SK-N-SH (cell line): ENCODE measurements at regions of chr3 and their contacts with region 1.

Region 1: DNA sequence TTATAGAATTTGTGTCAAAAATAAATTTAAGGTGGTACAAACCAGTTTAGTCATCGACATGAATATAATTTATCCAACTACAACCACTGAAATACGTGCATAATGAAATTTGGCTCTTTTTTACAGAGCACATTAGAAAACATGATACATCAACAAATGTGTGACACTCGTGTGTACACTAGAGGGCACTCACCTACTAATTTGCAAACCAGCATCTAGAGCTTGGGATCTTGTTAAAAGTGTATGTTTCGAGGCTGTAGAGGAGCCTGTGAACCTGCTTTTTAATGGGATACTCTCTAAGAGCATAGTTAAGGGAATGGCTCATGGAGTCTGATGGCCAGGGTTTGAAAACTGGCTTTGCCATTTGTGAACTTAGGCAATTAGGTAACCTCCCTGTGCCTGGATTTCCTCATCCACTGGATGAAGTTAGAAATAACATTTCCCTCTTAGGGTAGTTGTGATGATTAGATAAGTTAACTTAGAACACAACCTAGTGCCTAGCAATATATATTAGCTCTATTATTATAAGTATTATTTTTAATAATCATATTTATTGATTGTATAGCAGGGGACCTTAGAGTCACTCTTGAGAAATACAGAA is 8.8 kb upstream of the CPOX start:
- DNase-seq: peak; percentile 51
- H3K4me3 ChIP-seq: peak overlapping the region in 1 of 2 experiments; percentile 33; a peak in 1 of 4 replicates
- H3K27ac ChIP-seq: no peak overlapping the region; a peak in 1 of 4 replicates
- H3K4me1 ChIP-seq: no peaks in the 10 kb centered on the region; a peak in 1 of 4 replicates
- H3K27me3 ChIP-seq: no peaks in the 10 kb centered on the region
- CTCF ChIP-seq: peak; percentile 88
- EP300 ChIP-seq: no peak
- RAD21 ChIP-seq: peak; percentile 99

Region 2: DNA sequence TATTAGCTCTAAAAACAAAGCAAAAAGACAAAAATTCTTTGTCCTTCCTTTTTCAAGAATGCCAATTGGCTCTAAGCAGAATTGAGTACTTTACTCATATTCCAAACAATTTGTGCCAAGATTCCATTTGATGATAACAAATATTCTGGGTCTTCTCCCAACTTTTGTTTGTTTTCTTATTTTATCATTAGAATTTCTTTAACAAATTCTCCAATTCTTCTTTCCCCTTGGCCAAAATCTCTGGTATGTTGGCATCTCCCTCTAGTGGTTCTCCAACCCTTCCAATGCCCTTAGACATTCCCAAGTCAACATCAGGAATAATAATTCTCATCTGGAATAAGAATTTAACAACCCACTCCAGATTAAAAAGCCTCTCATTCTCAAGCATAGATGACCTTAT is 14.1 kb before region 1 on chr3:
- CTCF ChIA-PET with region 1: interaction called, 12 read pairs
- POLR2A ChIA-PET with region 1: no interaction called
- DNase-seq: no peak
- H3K4me3 ChIP-seq: no peak overlapping the region
- H3K27ac ChIP-seq: no peak overlapping the region
- H3K4me1 ChIP-seq: peaks cover 3 to 10% of the 10 kb centered on the region in 2 experiments; a peak in 3 of 4 replicates
- H3K27me3 ChIP-seq: no peaks in the 10 kb centered on the region
- CTCF ChIP-seq: peak; percentile 56
- EP300 ChIP-seq: no peak
- RAD21 ChIP-seq: no peak

Region 3: DNA sequence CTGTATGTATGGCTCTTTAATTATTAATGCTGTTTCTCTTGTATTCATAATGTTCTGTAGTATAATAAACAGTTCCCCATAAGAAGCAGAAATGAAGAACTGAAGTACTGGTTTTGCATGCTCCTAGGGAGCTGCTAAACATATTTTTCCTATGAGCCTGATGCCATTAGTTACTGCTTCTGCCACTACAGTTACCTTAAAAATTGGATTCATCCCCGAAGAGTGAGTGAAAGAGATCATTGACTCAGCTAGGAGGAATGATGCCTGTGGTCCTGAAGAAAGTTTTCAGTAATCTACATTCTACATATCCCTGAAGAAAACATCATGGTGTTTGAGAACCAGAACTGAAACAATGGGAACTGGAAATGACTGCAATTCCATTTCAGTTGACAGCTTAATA is 123.9 kb after region 1 on chr3:
- CTCF ChIA-PET with region 1: interaction called, 13 read pairs
- POLR2A ChIA-PET with region 1: no interaction called
- DNase-seq: no peak
- H3K4me3 ChIP-seq: no peak overlapping the region
- H3K27ac ChIP-seq: peak overlapping the region; percentile 14 to 24; a peak in 3 of 4 replicates
- H3K4me1 ChIP-seq: peaks cover 0 to 7% of the 10 kb centered on the region in 2 experiments; a peak in 3 of 4 replicates
- H3K27me3 ChIP-seq: no peaks in the 10 kb centered on the region
- CTCF ChIP-seq: no peak
- EP300 ChIP-seq: no peak
- RAD21 ChIP-seq: no peak

Region 4: GRCh38 chr3:98770261-98771039 is 168.3 kb after region 1 on chr3:
- CTCF ChIA-PET with region 1: interaction called, 12 read pairs
- POLR2A ChIA-PET with region 1: no interaction called
- DNase-seq: no peak
- H3K4me3 ChIP-seq: no peak overlapping the region
- H3K27ac ChIP-seq: peak overlapping the region in 1 of 2 experiments; percentile 14; a peak in 1 of 4 replicates
- H3K4me1 ChIP-seq: peaks cover 4 to 24% of the 10 kb centered on the region in 2 experiments; a peak in 3 of 4 replicates
- H3K27me3 ChIP-seq: no peaks in the 10 kb centered on the region
- CTCF ChIP-seq: no peak
- EP300 ChIP-seq: no peak
- RAD21 ChIP-seq: no peak

Region 5: DNA sequence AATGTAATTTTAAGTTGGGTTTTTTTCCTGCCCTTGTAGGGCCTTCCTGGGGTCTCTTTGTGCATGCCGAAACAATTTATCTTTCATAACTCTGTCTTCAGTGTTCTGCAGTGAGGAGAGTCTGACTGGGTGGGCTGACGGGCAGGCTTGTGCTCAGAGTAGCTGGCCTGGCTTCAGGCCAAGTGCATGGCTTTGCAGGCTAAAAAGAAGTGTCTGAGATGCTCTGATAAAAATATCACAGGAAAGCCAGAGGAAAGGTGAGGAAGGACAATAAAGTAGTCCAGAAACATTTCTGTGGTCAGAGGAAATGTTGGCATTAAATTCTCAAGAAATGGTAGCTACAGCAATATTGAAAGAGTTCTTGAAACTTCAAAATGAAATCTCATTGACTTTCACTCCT is 186.5 kb after region 1 on chr3:
- CTCF ChIA-PET with region 1: interaction called, 21 read pairs
- POLR2A ChIA-PET with region 1: no interaction called
- DNase-seq: peak; percentile 49
- H3K4me3 ChIP-seq: no peak overlapping the region
- H3K27ac ChIP-seq: peak overlapping the region; percentile 19 to 82; a peak in 3 of 4 replicates
- H3K4me1 ChIP-seq: peaks cover 15 to 18% of the 10 kb centered on the region in 2 experiments
- H3K27me3 ChIP-seq: no peaks in the 10 kb centered on the region
- CTCF ChIP-seq: no peak
- EP300 ChIP-seq: 0 out of 4 replicates have a peak, but pooled peaks have one; percentile 21 to 35
- RAD21 ChIP-seq: no peak

Region 6: DNA sequence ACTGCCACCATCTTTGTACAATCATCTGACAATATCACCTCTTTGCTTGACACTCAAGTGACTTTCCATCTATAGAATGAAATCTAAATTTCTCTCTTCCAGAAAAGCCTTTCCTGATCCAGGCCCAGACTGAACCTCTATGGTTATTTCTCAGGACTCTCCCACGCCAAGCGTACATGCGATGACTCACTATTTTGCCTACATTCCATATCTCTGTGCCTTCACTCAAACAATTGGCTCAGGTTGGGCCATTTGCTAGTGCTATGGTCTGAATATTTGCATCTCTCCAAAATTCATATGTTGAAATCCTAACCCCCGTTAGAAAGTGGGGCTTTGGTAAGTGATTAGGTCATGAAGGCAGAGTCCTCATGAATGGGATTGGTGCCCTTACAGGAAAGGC is 204.8 kb after region 1 on chr3:
- CTCF ChIA-PET with region 1: interaction called, 197 read pairs
- POLR2A ChIA-PET with region 1: no interaction called
- DNase-seq: no peak
- H3K4me3 ChIP-seq: no peak overlapping the region
- H3K27ac ChIP-seq: peak overlapping the region in 1 of 2 experiments; percentile 39; a peak in 2 of 4 replicates
- H3K4me1 ChIP-seq: peaks cover 0 to 5% of the 10 kb centered on the region in 2 experiments; a peak in 2 of 4 replicates
- H3K27me3 ChIP-seq: no peaks in the 10 kb centered on the region
- CTCF ChIP-seq: no peak
- EP300 ChIP-seq: no peak
- RAD21 ChIP-seq: no peak

Region 7: DNA sequence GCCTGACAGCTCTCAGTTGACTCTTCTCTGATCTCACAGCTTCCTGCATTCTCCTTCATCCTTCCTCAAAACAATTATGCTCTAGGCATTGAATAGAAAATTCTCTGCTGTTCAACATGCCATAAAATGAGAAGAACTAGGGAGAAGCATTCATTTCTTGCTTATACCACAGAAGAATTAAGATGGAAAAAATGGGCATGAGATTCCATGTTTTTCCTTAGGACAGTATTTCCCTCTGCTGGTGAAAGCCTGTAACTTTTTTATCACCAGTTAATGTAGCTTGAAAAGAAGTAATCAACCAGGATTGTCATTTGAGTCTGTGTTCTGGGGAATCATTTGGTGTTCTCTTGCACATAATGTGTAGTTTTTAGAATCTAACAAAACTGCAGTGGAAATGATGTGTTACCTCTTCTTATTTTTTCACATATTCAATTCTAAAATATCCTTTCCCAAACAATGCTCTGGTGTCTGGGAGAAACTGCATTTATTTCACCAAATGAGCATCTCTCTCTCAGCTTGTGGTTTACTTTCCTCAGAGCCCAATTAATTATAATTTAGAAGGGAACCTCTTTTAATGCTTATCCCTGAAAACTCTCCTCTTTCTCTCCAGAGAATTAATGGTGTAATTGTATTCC is 392.1 kb after region 1 on chr3:
- CTCF ChIA-PET with region 1: interaction called, 72 read pairs
- POLR2A ChIA-PET with region 1: no interaction called
- DNase-seq: peak; percentile 24
- H3K4me3 ChIP-seq: no peak overlapping the region
- H3K27ac ChIP-seq: peak overlapping the region in 1 of 2 experiments; percentile 5; a peak in 1 of 4 replicates
- H3K4me1 ChIP-seq: no peaks in the 10 kb centered on the region; a peak in 1 of 4 replicates
- H3K27me3 ChIP-seq: no peaks in the 10 kb centered on the region
- CTCF ChIP-seq: peak; percentile 85
- EP300 ChIP-seq: no peak
- RAD21 ChIP-seq: peak; percentile 96